ENCODE measurements at regions of chr4 and their contacts with region 1.

Region 1: GRCh38 chr4:149008415-149009025 is 566.3 kb upstream of the NR3C2 start:
- ATAC-seq: peak in 5 of 8 experiments; percentile 38 to 98 (median 48)
- H3K4me3 ChIP-seq: no peak overlapping the region
- H3K27ac ChIP-seq: no peak overlapping the region
- H3K4me1 ChIP-seq: no peaks in the 10 kb centered on the region

Region 2: DNA sequence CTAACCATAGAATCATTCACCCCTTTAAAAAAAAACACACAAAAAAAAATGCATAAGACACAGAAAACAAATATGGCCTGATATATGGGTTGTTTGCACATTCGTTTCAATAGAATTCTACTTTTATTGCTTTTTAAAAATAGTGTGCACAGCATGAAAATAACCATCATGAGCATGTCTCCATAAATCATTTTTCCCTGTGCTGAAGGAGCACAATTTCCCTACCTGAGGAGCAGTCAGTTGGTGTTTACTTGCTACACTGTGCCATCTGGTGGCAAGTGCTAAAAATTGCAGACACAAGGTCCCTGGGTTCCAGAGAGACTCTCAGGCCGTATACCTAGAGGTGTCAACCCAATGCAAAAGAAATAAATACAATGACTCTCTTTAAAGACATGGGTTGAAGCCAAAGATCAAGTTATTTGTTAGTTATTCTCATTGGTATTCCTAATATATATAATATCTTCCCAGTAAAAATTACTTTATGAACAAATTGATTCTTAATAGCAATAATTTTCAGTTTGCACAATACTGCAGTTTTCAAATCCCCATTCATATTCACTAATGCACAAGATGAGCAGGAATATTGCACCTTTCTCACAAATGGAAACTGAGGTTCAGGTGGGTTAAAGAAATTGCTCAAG is 255.7 kb after region 1 on chr4:
- in situ Hi-C with region 1: loop called in 1 of 9 experiments (anchors 25 kb)
- ATAC-seq: peak in 6 of 8 experiments; percentile 37 to 88 (median 66)
- H3K4me3 ChIP-seq: no peak overlapping the region
- H3K27ac ChIP-seq: no peak overlapping the region
- H3K4me1 ChIP-seq: no peaks in the 10 kb centered on the region